Right cardiac atrium (tissue), 5 donors: ENCODE measurements at regions of chr1 and their contacts with region 1.

Region 1: GRCh38 chr1:246641394-246641793 is 75.1 kb downstream of the CNST start:
- DNase-seq: no peak
- ATAC-seq: no peak
- H3K4me3 ChIP-seq: no peak overlapping the region
- H3K27ac ChIP-seq: no peak overlapping the region
- H3K4me1 ChIP-seq: peaks cover 1% of the 10 kb centered on the region
- H3K27me3 ChIP-seq: no peaks in the 10 kb centered on the region

Region 2: DNA sequence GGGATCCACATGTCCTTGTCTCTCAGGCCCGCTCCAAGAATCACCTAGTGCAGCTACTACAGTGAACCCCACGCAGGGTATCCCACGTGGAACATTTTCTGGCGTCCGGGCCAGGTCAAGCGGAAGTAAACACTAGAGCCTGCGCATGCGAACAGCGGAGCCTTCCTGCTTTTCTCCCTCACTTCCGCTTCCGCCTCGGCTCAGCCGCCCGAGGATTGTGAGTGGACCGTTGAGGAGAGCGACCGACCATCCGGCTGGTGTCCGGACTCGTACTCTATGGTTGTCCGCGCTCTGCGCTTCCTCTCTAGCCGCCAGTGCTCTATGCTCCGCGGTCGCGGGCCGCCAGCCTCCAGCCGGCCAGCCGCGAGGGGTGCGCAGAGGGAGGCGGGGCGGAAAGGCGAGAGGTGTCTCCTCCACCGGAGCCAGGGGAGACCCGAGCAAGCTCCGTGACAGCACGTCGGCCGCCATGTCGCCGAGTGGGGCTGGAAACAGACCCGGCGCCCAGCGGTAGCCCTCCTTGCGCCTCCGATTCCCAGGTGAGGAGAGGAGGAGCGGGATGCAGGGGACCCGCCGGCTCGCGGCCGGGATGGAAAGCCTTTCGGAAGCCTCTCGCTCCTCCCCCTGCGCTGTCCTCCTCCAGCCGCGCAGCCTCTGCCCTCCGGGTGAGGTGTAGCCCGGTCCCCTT is 75.1 kb before region 1 on chr1 and contains the starts of genes CNST and TFB2M:
- intact Hi-C with region 1: loop called in 1 of 4 experiments (anchors 5 kb)
- DNase-seq: peak; percentile 98 to 99 (median 99)
- ATAC-seq: peak; percentile 99
- H3K4me3 ChIP-seq: peak within 1 kb of the TSS; percentile 76
- H3K27ac ChIP-seq: peak within 1 kb of the TSS; percentile 96
- H3K4me1 ChIP-seq: no peaks in the 10 kb centered on the region
- H3K27me3 ChIP-seq: no peaks in the 10 kb centered on the region
- total RNA-seq, gene CNST: 18.6 to 32.6 (median 21.4) TPM
- total RNA-seq, gene TFB2M: 9.9 to 13.6 (median 10.5) TPM

Region 3: GRCh38 chr1:247448107-247448791 is 806.9 kb after region 1 on chr1:
- intact Hi-C with region 1: no loop called
- DNase-seq: peak; percentile 67 to 90 (median 86)
- ATAC-seq: peak; percentile 93
- H3K4me3 ChIP-seq: peak overlapping the region; percentile 59
- H3K27ac ChIP-seq: peak overlapping the region; percentile 37
- H3K4me1 ChIP-seq: no peaks in the 10 kb centered on the region
- H3K27me3 ChIP-seq: no peaks in the 10 kb centered on the region